OCI-LY7 (cell line): ENCODE measurements at regions of chr3 and their contacts with region 1.

Region 1: DNA sequence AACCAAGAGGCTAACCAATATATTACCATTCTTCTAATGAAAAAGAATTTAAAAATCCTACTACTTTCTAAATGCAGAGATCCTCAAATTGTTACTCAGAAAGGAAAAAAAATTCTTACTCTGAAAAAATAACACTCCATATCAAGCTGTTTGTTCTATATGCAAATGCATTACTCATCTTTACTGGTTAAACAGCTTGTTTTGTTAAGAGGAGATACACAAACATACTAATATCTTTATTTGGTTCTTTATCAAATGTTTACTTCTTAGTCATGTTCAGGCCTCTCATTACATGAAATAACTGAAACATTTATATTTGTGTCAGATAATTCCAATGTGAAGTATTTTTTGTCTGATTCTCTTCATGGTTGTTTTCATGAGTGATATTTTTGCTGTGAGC is 146.8 kb downstream of the PCCB start:
- DNase-seq: no peak
- H3K4me3 ChIP-seq: no peak overlapping the region
- H3K27ac ChIP-seq: no peak overlapping the region
- H3K4me1 ChIP-seq: no peaks in the 10 kb centered on the region
- CTCF ChIP-seq: no peak

Region 2: GRCh38 chr3:136186846-136187245 is 210.1 kb before region 1 on chr3:
- CTCF ChIA-PET with region 1: no interaction called
- POLR2A ChIA-PET with region 1: interaction called, 10 read pairs
- intact Hi-C with region 1: no loop called
- DNase-seq: no peak
- H3K4me3 ChIP-seq: no peak overlapping the region
- H3K27ac ChIP-seq: no peak overlapping the region
- H3K4me1 ChIP-seq: peaks cover 64% of the 10 kb centered on the region
- CTCF ChIP-seq: no peak